ENCODE measurements at regions of chr6 and their contacts with region 1.

Region 1: GRCh38 chr6:154229786-154230185 is 126.8 kb downstream of the IPCEF1 start:
- DNase-seq: peak in 1 of 2 donors; percentile 73
- ATAC-seq: peak; percentile 73 to 78 (median 77)
- H3K4me3 ChIP-seq: peak overlapping the region; percentile 19
- H3K4me3 Mint-ChIP-seq: peak overlapping the region; percentile 91
- H3K27ac ChIP-seq: peak overlapping the region; percentile 61
- H3K27ac Mint-ChIP-seq: peak overlapping the region; percentile 76 to 92
- H3K4me1 ChIP-seq: peaks cover 34% of the 10 kb centered on the region
- H3K4me1 Mint-ChIP-seq: peaks cover 72 to 73% of the 10 kb centered on the region in 2 donors
- H3K27me3 ChIP-seq: no peaks in the 10 kb centered on the region
- H3K27me3 Mint-ChIP-seq: no peaks in the 10 kb centered on the region
- CTCF ChIP-seq: no peak

Region 2: DNA sequence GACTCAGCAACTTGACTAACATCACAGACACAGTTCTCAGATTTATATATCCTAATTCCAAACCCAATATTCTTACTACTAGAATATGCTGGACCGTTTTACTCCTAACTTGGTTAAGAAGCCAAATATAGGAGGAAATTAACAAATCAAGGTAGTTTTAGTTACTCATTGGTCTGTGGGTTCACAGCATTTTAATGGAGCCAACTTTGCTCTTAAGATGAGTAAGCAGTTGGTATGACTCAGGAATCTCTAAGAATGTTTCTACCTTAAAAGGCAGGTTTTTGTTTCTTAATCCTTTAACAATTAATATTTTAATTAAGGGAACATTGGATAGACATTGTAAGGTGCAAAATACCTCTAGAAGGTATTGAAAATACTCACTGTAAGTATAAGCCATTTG is 159.1 kb before region 1 on chr6:
- intact Hi-C with region 1: no loop called
- DNase-seq: no peak
- ATAC-seq: no peak
- H3K4me3 ChIP-seq: no peak overlapping the region
- H3K4me3 Mint-ChIP-seq: no peak overlapping the region
- H3K27ac ChIP-seq: no peak overlapping the region
- H3K27ac Mint-ChIP-seq: no peak overlapping the region
- H3K4me1 ChIP-seq: no peaks in the 10 kb centered on the region
- H3K4me1 Mint-ChIP-seq: no peaks in the 10 kb centered on the region
- H3K27me3 ChIP-seq: peaks cover 3% of the 10 kb centered on the region
- H3K27me3 Mint-ChIP-seq: no peaks in the 10 kb centered on the region
- CTCF ChIP-seq: no peak

Region 3: DNA sequence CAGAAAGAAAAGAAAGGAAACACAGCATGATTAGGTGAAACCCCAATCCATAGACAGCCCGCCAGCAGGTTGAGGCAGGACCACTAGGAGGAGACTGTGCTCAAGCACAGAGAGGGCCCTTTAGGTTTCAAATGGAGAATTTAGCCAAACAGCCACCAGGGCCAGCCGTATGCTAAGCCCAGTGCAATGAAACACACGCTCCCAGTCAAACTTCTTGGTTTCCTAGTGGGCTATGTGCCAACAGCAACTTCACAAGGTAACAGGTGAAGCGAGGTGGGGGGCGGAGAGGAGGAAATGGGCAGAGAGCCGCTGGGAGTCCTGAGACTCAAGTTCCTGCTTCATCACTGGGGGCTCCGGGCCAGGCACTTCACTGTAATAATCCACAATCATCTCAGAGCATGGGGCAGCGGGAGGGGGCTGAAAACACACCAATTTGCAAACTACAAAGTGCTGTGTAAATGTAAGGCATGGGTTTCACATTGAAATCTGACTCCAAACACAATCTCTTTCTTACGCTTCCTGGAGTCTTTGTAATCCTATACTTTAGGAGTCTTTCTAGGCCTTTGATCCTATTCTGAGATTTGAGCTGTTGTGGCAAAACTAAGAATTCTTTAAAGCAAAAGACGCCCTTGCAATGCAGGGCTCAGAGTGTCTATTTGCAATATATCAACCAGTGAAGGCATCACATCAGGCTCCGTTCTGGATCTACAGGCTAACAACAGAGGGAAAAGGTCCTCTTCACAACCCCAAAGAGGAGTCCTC is 73.5 kb before region 1 on chr6:
- intact Hi-C with region 1: loop called (anchors 5 kb)
- DNase-seq: peak; percentile 34 to 82
- ATAC-seq: peak; percentile 88 to 92 (median 88)
- H3K4me3 ChIP-seq: no peak overlapping the region
- H3K4me3 Mint-ChIP-seq: peak overlapping the region; percentile 71
- H3K27ac ChIP-seq: peak overlapping the region; percentile 66
- H3K27ac Mint-ChIP-seq: peak overlapping the region; percentile 84 to 89
- H3K4me1 ChIP-seq: peaks cover 27% of the 10 kb centered on the region
- H3K4me1 Mint-ChIP-seq: peaks cover 32 to 34% of the 10 kb centered on the region in 2 donors
- H3K27me3 ChIP-seq: no peaks in the 10 kb centered on the region
- H3K27me3 Mint-ChIP-seq: no peaks in the 10 kb centered on the region
- CTCF ChIP-seq: peak; percentile 67

Region 4: DNA sequence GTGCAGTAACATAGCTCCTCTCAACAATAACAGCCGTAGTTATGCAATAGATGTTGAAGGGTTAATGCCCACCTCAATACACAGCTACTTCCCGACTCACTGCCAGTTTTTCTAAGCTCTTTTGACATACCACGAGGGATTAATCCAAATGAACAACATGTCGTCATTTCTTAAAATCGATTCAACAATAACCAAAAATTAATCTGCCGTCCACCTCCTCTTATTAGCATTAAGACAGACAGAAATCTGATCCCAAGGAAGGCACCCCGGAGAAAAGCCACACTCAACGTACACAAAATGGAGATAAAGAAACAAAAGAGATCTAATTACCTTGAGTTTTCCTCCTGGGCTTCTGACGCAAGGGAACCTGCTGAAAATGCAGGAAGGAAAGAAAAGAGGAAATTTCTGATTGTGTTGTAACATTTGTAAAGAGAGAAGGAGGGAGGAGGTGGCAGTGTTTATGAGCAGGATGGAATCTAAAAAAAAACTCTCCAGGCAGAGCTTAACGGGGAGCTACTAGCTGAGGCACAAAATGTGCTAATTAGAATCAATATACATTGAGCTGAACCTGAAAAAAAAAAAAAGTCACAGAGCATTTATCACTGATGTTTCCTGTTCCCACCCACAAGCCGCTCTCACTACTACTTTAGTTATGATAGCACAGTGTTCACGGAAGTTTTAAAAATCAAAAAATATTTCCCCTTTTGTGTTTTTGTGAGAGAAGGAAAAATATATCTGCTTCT is 17.5 kb after region 1 on chr6:
- intact Hi-C with region 1: loop called (anchors 1 kb)
- DNase-seq: peak in 1 of 2 donors; percentile 70
- ATAC-seq: peak; percentile 70 to 79 (median 78)
- H3K4me3 ChIP-seq: peak overlapping the region; percentile 67
- H3K4me3 Mint-ChIP-seq: peak overlapping the region; percentile 95
- H3K27ac ChIP-seq: peak overlapping the region; percentile 85
- H3K27ac Mint-ChIP-seq: peak overlapping the region; percentile 89 to 93
- H3K4me1 ChIP-seq: peaks cover 38% of the 10 kb centered on the region
- H3K4me1 Mint-ChIP-seq: peaks cover 83 to 87% of the 10 kb centered on the region in 2 donors
- H3K27me3 ChIP-seq: no peaks in the 10 kb centered on the region
- H3K27me3 Mint-ChIP-seq: no peaks in the 10 kb centered on the region
- CTCF ChIP-seq: no peak

Region 5: DNA sequence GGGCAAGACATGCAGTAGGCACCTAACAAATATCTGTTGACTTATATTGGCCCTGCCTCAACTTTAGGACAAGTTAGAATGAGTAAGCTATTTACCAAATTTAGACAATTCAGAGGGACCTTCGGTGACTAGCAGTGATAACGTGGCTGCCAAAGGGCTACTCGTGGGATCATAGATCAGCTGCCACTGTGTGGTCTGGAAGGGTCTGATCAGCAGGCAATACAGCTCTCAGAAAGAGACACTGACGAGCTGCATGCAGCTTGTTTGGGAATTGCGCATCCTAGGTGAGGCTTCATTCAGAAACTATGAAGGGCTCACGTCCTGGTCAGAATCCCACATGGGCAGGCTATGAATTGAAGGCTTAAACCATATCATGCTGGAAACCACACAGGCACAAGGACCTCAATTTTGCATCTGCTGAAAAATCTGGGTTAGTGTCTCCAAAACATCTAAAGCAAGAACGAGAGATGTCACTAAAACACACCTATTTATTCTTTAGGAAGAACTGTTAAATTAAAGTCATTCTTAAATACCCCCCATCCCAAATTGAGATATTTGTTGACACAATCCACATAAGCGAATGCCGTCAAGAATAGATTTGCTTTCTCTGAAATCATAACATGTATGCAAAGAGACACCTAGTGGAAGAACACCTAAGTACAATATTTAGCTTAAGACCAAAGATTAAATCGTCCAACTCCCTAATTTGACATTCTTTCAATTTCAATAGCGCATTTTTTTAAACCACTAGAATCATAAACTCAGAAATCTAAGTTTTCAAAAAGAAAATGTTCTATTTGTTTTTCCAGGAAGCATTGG is 47.2 kb after region 1 on chr6:
- intact Hi-C with region 1: loop called (anchors 5 kb)
- DNase-seq: peak in 1 of 2 donors; percentile 79
- ATAC-seq: peak; percentile 70 to 92 (median 86)
- H3K4me3 ChIP-seq: peak overlapping the region; percentile 17
- H3K4me3 Mint-ChIP-seq: peak overlapping the region; percentile 80
- H3K27ac ChIP-seq: no peak overlapping the region
- H3K27ac Mint-ChIP-seq: peak overlapping the region in 1 of 2 donors; percentile 76
- H3K4me1 ChIP-seq: peaks cover 8% of the 10 kb centered on the region
- H3K4me1 Mint-ChIP-seq: peaks cover 15 to 16% of the 10 kb centered on the region in 2 donors
- H3K27me3 ChIP-seq: no peaks in the 10 kb centered on the region
- H3K27me3 Mint-ChIP-seq: no peaks in the 10 kb centered on the region
- CTCF ChIP-seq: peak; percentile 80

Measured in natural killer cell (primary cell).